Activated CD4-positive, alpha-beta T cell treated with anti-CD3 and anti-CD28 coated beads, Interleukin-2, amount 10 ng/mL, durations not matched to agents 7 days and 5 days (primary cell): ENCODE measurements at regions of chr12 and their contacts with region 1.

Region 1: DNA sequence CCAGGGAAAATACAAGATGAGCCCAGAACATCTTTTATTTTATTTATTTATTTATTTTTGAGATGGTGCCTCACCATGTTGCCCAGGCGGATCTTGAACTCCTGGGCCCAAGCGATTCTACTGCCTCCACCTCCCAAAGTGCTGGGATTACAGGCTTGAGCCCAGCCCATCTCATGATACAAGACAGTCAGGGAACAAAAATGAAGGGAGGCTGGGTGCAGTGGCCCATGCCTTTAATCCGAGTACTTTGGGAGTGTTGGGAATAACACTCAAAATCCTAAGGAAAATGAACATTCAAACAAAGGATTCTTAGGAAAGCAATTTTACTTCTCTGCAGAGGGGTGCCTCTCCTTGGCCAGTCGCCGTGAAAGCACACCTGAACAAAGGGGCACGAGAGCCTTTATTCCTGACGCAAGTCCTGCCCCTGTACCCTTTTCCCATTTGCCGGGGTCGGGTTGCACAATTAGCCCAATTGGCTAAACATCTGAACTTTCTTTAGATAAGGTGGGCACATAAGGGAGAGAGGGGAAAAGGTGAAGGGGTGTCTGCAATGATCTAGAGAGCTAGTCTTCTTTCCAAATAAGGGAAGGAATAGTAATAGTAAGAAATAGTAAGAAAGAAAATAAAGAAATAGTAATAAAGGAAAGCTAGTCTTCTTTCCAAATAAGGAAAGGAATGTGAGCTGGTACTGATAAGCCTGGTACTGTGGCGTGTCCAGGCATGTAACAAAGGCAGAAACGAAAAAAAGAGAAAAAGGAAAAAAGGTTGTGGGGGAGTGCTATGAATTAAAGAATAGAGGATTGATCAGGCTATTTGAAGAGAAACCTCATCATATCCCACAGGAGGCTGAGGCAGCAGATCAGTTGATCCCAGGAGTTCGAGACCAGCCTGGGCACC is 13.4 kb downstream of the NCAPD2 start:
- DNase-seq: no peak
- H3K4me3 Mint-ChIP-seq: no peak overlapping the region
- H3K27ac Mint-ChIP-seq: no peak overlapping the region
- H3K4me1 Mint-ChIP-seq: peaks cover 16% of the 10 kb centered on the region
- H3K27me3 Mint-ChIP-seq: no peaks in the 10 kb centered on the region

Region 2: GRCh38 chr12:6416596-6416995 is 90.8 kb before region 1 on chr12:
- CTCF ChIA-PET with region 1: no interaction called
- POLR2A ChIA-PET with region 1: no interaction called
- DNase-seq: no peak
- H3K4me3 Mint-ChIP-seq: no peak overlapping the region
- H3K27ac Mint-ChIP-seq: no peak overlapping the region
- H3K4me1 Mint-ChIP-seq: peaks cover 13% of the 10 kb centered on the region
- H3K27me3 Mint-ChIP-seq: peaks cover 2% of the 10 kb centered on the region

Region 3: DNA sequence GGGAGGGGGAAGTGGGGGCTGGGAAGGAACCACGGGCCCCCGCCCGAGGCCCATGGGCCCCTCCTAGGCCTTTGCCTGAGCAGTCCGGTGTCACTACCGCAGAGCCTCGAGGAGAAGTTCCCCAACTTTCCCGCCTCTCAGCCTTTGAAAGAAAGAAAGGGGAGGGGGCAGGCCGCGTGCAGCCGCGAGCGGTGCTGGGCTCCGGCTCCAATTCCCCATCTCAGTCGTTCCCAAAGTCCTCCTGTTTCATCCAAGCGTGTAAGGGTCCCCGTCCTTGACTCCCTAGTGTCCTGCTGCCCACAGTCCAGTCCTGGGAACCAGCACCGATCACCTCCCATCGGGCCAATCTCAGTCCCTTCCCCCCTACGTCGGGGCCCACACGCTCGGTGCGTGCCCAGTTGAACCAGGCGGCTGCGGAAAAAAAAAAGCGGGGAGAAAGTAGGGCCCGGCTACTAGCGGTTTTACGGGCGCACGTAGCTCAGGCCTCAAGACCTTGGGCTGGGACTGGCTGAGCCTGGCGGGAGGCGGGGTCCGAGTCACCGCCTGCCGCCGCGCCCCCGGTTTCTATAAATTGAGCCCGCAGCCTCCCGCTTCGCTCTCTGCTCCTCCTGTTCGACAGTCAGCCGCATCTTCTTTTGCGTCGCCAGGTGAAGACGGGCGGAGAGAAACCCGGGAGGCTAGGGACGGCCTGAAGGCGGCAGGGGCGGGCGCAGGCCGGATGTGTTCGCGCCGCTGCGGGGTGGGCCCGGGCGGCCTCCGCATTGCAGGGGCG is 26.8 kb after region 1 on chr12 and contains the start of gene GAPDH:
- CTCF ChIA-PET with region 1: interaction called, 11 read pairs
- POLR2A ChIA-PET with region 1: interaction called, 3 read pairs
- DNase-seq: peak; percentile 91
- H3K4me3 Mint-ChIP-seq: peak within 1 kb of the TSS; percentile 90
- H3K27ac Mint-ChIP-seq: peak within 1 kb of the TSS; percentile 98
- H3K4me1 Mint-ChIP-seq: peaks cover 52% of the 10 kb centered on the region
- H3K27me3 Mint-ChIP-seq: no peaks in the 10 kb centered on the region
- total RNA-seq, gene GAPDH: 4,459 to 4,958 TPM